Activated CD4-positive, alpha-beta T cell treated with anti-CD3 and anti-CD28 coated beads for 36 hours (primary cell): ENCODE measurements at regions of chr7 and their contacts with region 1.

Region 1: DNA sequence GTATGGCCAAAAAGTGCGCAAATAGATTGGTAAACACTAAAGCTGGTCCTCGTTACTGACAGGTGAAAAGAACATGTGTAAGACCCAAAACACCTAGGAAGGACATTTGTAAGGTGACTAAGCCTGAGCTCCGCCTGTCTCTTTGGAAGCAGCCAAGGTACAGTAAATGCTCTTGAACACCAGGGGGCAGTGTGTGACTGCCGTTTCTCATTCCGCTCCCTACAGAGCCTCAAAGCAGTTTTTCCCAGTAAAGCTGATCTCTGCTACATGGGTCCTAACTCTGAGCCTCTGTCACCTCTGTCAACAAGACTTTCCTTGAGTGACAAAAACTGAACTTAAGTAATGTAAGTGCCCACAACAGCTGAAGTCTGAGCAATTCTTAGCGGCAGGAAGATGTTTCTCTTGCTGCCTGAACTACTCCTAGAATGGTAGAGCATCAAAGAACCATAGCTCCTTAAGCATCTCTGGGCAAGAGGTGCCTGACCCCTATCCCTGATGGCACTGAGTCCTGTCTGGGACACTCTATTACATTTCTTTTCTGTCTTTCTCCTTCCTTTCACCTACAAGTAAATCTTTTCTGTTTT is 238.0 kb upstream of the INHBA start:
- DNase-seq: peak; percentile 68
- ATAC-seq: peak; percentile 87
- H3K4me3 Mint-ChIP-seq: no peak overlapping the region
- H3K27ac Mint-ChIP-seq: no peak overlapping the region
- H3K4me1 Mint-ChIP-seq: peaks cover 6% of the 10 kb centered on the region
- H3K27me3 Mint-ChIP-seq: peaks cover 39% of the 10 kb centered on the region

Region 2: GRCh38 chr7:41824284-41824683 is 116.6 kb before region 1 on chr7:
- CTCF ChIA-PET with region 1: no interaction called
- POLR2A ChIA-PET with region 1: no interaction called
- intact Hi-C with region 1: no loop called
- DNase-seq: peak; percentile 17
- ATAC-seq: peak; percentile 61
- H3K4me3 Mint-ChIP-seq: no peak overlapping the region
- H3K27ac Mint-ChIP-seq: no peak overlapping the region
- H3K4me1 Mint-ChIP-seq: no peaks in the 10 kb centered on the region
- H3K27me3 Mint-ChIP-seq: peaks cover 11% of the 10 kb centered on the region

Region 3: GRCh38 chr7:41930538-41931262 is 10.2 kb before region 1 on chr7:
- CTCF ChIA-PET with region 1: interaction called, 11 read pairs
- POLR2A ChIA-PET with region 1: no interaction called
- intact Hi-C with region 1: no loop called
- DNase-seq: no peak
- ATAC-seq: no peak
- H3K4me3 Mint-ChIP-seq: no peak overlapping the region
- H3K27ac Mint-ChIP-seq: no peak overlapping the region
- H3K4me1 Mint-ChIP-seq: peaks cover 2% of the 10 kb centered on the region
- H3K27me3 Mint-ChIP-seq: peaks cover 12% of the 10 kb centered on the region

Region 4: DNA sequence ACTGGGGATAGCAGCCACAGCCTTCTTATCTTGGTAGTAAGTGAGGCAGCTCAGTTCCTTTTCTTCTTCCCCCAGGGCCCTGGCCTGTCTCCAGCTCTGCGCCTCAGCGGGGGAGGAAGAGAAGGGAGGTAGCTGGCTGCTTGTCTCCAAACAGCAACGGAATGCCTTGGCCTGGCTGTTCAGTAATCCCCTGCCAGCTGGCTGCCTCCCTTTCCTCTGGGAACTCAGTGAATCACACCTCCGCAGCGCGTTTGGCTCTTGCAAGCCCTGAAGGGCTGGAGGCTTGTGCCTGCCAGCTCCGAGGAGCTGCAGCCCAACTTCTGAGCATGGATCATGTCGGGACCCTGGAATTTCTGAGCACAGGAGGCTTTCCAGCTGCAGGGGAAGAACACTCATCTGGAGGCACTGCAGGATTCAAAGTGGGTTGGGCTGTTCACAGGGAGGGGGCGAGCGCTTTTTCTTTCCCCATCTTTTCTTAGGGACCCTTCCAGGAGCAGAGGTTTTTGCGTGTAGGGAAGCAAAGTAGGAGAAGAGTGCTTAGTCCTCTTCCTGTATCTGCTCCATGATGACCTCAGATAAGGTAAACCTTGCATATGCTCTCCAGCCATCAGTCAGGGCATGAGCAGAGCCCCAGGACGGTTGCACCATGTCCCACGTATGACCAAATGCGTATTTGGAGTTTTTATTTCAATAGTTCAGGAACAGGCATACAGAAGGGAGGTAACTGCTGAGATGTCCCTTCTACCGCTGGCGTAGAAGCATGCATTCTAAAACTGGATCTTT is 15.2 kb after region 1 on chr7:
- CTCF ChIA-PET with region 1: interaction called, 13 read pairs
- POLR2A ChIA-PET with region 1: no interaction called
- intact Hi-C with region 1: no loop called
- DNase-seq: no peak
- ATAC-seq: no peak
- H3K4me3 Mint-ChIP-seq: no peak overlapping the region
- H3K27ac Mint-ChIP-seq: no peak overlapping the region
- H3K4me1 Mint-ChIP-seq: no peaks in the 10 kb centered on the region
- H3K27me3 Mint-ChIP-seq: peaks cover 23% of the 10 kb centered on the region

Region 5: DNA sequence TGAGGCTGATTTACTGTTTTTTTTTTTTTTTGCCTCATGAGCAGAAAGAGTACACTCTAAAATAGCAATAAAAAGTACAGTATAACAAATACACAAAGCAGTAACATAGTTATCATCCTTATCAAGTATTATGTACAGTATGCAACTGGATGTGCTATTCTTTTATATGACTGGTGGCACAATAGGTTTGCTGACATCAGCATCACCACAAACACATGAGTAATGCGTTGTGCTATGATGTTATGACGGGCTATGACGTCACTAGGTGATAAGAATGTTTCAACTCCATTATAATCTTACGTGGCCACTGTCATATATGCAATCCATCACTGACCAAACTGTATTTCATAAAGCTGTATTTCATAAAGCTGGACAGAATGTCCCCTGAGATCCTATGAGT is 485.3 kb after region 1 on chr7:
- CTCF ChIA-PET with region 1: no interaction called
- POLR2A ChIA-PET with region 1: no interaction called
- intact Hi-C with region 1: no loop called
- DNase-seq: no peak
- ATAC-seq: no peak
- H3K4me3 Mint-ChIP-seq: no peak overlapping the region
- H3K27ac Mint-ChIP-seq: no peak overlapping the region
- H3K4me1 Mint-ChIP-seq: no peaks in the 10 kb centered on the region
- H3K27me3 Mint-ChIP-seq: peaks cover 2% of the 10 kb centered on the region

Region 6: GRCh38 chr7:42843205-42843800 is 902.5 kb after region 1 on chr7:
- CTCF ChIA-PET with region 1: interaction called, 4 read pairs
- POLR2A ChIA-PET with region 1: no interaction called
- intact Hi-C with region 1: loop called (anchors 5 kb)
- DNase-seq: peak; percentile 51
- ATAC-seq: peak; percentile 39
- H3K4me3 Mint-ChIP-seq: no peak overlapping the region
- H3K27ac Mint-ChIP-seq: no peak overlapping the region
- H3K4me1 Mint-ChIP-seq: no peaks in the 10 kb centered on the region
- H3K27me3 Mint-ChIP-seq: peaks cover 29% of the 10 kb centered on the region

Region 7: GRCh38 chr7:42876182-42877068 is 935.6 kb after region 1 on chr7:
- CTCF ChIA-PET with region 1: interaction called, 7 read pairs
- POLR2A ChIA-PET with region 1: no interaction called
- intact Hi-C with region 1: loop called in 1 of 2 experiments (anchors 2 kb)
- DNase-seq: peak; percentile 80
- ATAC-seq: peak; percentile 73
- H3K4me3 Mint-ChIP-seq: no peak overlapping the region
- H3K27ac Mint-ChIP-seq: no peak overlapping the region
- H3K4me1 Mint-ChIP-seq: no peaks in the 10 kb centered on the region
- H3K27me3 Mint-ChIP-seq: no peaks in the 10 kb centered on the region

Region 8: DNA sequence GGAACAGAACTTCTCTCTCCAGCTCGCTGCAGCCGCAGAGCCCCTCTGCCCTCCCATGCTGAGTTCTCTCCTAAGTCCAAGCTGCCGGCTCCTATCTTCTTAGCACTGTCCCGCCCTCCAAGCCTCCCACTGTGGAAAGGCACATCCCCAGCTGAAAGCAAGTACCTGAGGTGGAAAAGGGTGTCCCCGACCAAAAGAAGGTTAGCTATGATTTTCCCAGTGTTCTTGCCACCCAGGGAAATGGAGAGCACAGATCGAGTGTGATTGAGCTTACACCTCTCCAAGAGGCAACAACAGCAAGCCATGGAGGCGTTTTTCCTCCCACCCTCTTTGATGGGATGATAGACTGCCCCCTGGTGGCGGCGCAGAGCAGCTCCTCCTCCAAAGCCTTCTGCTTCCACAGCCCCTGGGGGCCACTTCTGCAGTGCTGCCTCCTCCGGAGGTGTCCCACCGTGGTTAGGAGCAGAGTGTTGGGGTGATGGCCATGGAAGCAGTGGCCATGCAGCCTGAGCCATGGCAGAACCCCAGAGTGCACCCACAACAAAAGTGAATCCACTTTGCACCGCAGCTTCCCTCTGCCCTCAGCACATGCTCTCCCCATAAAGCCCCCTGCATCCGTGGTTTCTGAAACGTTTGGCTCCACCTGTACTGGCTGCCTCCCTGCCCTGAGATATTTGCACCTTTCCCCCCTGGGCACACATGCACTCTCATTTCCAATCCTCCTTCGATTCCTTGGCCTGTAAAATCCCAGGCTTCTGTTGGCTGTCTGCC is 1499.0 kb after region 1 on chr7:
- CTCF ChIA-PET with region 1: no interaction called
- POLR2A ChIA-PET with region 1: no interaction called
- intact Hi-C with region 1: loop called in 1 of 2 experiments (anchors 10 kb)
- DNase-seq: peak; percentile 83
- ATAC-seq: peak; percentile 73
- H3K4me3 Mint-ChIP-seq: no peak overlapping the region
- H3K27ac Mint-ChIP-seq: no peak overlapping the region
- H3K4me1 Mint-ChIP-seq: peaks cover 4% of the 10 kb centered on the region
- H3K27me3 Mint-ChIP-seq: peaks cover 2% of the 10 kb centered on the region